CD4-positive, alpha-beta memory T cell (primary cell): ENCODE measurements at regions of chr1 and their contacts with region 1.

Region 1: DNA sequence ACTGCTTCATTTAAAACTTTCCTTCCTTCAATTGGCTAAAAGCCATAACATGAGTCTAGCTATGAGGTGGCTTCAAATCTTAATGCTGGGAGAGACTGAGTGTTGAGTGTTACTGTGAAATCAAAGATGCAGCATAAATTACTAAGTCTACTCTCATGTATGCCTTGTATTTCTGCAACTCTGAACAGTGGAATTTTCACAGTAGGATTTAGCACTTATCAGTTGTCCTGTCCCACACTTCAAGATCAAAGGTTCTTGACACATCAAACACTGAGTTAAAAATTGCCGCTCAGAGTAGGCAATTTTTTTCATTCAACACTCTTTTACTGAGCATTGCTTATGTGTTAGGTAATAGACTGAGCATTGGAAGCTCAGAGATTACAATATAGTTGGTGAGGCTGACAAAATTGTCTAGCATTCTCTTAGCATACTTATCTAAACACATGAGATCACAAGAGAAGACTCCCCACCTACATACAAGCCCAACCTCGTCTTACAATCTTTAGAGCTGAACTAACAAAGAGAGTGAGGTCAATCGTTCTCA is 56.4 kb upstream of the ADORA3 start:
- DNase-seq: no peak
- H3K4me3 ChIP-seq: no peak overlapping the region
- H3K4me3 Mint-ChIP-seq: no peak overlapping the region
- H3K27ac ChIP-seq: no peak overlapping the region
- H3K27ac Mint-ChIP-seq: no peak overlapping the region
- H3K4me1 ChIP-seq: no peaks in the 10 kb centered on the region
- H3K4me1 Mint-ChIP-seq: peaks cover 0 to 8% (median 2%) of the 10 kb centered on the region in 4 donors
- H3K27me3 ChIP-seq: no peaks in the 10 kb centered on the region
- H3K27me3 Mint-ChIP-seq: no peaks in the 10 kb centered on the region

Region 2: GRCh38 chr1:111520053-111520452 is 39.8 kb before region 1 on chr1:
- CTCF ChIA-PET with region 1: no interaction called
- POLR2A ChIA-PET with region 1: no interaction called
- intact Hi-C with region 1: no loop called
- DNase-seq: no peak
- H3K4me3 ChIP-seq: no peak overlapping the region
- H3K4me3 Mint-ChIP-seq: no peak overlapping the region
- H3K27ac ChIP-seq: no peak overlapping the region
- H3K27ac Mint-ChIP-seq: no peak overlapping the region
- H3K4me1 ChIP-seq: peaks cover 37% of the 10 kb centered on the region
- H3K4me1 Mint-ChIP-seq: peaks cover 23 to 36% (median 26%) of the 10 kb centered on the region in 4 donors
- H3K27me3 ChIP-seq: no peaks in the 10 kb centered on the region
- H3K27me3 Mint-ChIP-seq: no peaks in the 10 kb centered on the region

Region 3: DNA sequence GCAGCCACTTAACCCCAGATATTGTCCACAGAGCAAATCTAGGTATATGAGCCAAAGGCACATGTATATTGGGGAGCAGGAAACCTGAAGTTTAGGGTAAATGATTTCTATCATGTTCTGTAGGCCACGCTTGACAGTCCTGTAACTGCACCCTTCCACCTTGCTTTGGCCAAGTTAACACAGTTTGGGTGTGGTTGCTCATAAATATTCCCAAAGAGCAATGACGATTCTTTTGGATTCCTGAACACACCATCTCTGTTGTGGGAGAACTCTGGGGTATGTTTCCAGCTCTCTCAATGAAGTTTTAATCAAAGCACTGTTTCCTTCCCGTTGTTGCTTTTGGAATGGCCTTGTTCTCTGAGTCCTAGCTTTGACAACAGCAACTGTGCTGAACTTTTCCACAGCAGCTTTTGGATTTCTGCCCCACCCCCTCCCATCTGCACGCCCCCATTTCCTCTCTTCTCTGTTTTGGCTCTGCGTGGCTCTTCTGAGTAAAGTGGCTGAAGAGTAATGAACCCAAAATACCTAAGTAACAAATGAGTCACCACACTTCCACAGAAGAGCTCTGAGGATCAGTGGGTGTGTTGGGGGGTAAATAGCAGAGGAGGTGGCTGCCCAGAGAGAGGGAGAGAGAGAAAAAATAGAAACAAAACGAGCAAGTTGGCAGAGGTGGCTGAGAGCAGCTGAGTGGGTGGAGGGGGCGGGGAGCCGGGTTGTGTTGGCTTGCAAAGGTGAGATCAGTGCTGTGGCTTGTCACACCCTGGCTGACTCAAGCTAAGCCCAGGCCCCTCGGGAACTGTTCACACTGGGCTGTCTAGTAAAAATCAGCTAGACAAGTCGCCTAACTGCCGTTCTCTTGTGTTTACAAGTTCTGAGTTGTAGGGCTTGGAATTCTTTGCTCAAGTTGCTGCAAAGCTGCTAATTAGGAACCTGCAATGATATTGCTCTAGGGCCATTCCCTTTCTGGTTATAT is 32.9 kb after region 1 on chr1:
- CTCF ChIA-PET with region 1: interaction called, 3 read pairs
- POLR2A ChIA-PET with region 1: interaction called, 4 read pairs
- intact Hi-C with region 1: loop called (anchors 5 kb)
- DNase-seq: peak; percentile 66 to 98 (median 77)
- H3K4me3 ChIP-seq: peak overlapping the region in 1 of 2 donors; percentile 15
- H3K4me3 Mint-ChIP-seq: peak overlapping the region; percentile 6 to 81 (median 69)
- H3K27ac ChIP-seq: peak overlapping the region; percentile 46
- H3K27ac Mint-ChIP-seq: peak overlapping the region; percentile 85 to 94 (median 92)
- H3K4me1 ChIP-seq: peaks cover 68% of the 10 kb centered on the region
- H3K4me1 Mint-ChIP-seq: peaks cover 48 to 57% (median 51%) of the 10 kb centered on the region in 4 donors
- H3K27me3 ChIP-seq: no peaks in the 10 kb centered on the region
- H3K27me3 Mint-ChIP-seq: no peaks in the 10 kb centered on the region

Region 4: DNA sequence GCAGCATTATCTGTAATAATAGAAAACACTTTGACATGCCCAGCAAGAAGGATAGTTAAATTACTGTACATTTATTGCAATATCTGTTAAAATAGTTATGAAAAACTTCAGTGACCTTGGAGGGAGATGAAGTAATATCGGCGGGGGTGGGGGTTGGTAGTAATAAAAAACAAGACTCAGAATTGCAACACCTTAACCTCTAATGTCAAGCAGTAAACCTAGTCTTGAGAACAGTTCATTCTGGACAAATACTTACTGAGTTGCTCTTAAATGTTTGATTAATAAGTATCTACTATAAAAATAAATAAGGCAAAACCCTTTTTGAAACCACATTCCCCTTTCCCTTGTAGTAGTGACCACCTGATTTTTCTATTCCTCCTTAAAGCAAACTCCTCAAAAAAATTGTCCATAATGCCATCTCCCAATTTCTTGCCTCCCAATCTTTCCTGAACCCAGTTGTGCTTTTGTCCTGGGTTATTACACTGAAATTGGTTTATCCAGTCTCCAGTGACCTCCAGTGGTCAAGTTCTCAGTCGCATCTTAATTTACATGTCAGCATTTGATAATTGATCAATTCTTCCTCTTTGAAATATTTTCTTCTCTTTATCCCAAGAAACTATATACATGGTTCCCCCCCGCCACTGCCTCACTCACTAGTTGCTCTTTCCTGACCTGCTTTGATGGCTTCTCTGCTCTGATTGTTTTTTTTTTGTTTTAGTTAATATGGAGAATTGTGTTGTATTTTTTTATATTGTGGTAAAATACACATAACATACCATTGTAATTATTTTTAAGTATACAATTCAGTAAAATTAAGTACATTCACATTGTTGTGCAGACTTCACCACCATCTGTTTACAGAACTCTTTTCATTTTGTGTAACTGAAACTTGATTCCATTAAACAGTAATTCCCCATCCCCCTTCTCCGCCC is 96.5 kb after region 1 on chr1:
- CTCF ChIA-PET with region 1: no interaction called
- POLR2A ChIA-PET with region 1: no interaction called
- intact Hi-C with region 1: loop called (anchors 1 kb)
- DNase-seq: peak in 4 of 5 donors; percentile 18 to 39 (median 36)
- H3K4me3 ChIP-seq: no peak overlapping the region
- H3K4me3 Mint-ChIP-seq: peak overlapping the region in 4 of 8 donors; percentile 16 to 53 (median 28)
- H3K27ac ChIP-seq: no peak overlapping the region
- H3K27ac Mint-ChIP-seq: peak overlapping the region in 5 of 7 donors; percentile 8 to 57 (median 45)
- H3K4me1 ChIP-seq: peaks cover 84% of the 10 kb centered on the region
- H3K4me1 Mint-ChIP-seq: peaks cover 38 to 51% (median 45%) of the 10 kb centered on the region in 4 donors
- H3K27me3 ChIP-seq: no peaks in the 10 kb centered on the region
- H3K27me3 Mint-ChIP-seq: no peaks in the 10 kb centered on the region